ENCODE measurements at regions of chr2 and their contacts with region 1.

Region 1: GRCh38 chr2:196171248-196171871 is at the start of gene STK17B:
- DNase-seq: peak; percentile 92
- ATAC-seq: peak; percentile 94 to 95
- H3K4me3 ChIP-seq: peak within 1 kb of the TSS; percentile 74 to 97 (median 89)
- H3K27ac ChIP-seq: peak within 1 kb of the TSS; percentile 77 to 92 (median 86)
- H3K4me1 ChIP-seq: peaks cover 13 to 22% of the 10 kb centered on the region in 2 donors
- H3K27me3 ChIP-seq: no peaks in the 10 kb centered on the region
- CTCF ChIP-seq: no peak
- POLR2A ChIP-seq: peak; percentile 71 to 87
- total RNA-seq, gene STK17B: 4.4 to 11.5 (median 8.8) TPM

Region 2: DNA sequence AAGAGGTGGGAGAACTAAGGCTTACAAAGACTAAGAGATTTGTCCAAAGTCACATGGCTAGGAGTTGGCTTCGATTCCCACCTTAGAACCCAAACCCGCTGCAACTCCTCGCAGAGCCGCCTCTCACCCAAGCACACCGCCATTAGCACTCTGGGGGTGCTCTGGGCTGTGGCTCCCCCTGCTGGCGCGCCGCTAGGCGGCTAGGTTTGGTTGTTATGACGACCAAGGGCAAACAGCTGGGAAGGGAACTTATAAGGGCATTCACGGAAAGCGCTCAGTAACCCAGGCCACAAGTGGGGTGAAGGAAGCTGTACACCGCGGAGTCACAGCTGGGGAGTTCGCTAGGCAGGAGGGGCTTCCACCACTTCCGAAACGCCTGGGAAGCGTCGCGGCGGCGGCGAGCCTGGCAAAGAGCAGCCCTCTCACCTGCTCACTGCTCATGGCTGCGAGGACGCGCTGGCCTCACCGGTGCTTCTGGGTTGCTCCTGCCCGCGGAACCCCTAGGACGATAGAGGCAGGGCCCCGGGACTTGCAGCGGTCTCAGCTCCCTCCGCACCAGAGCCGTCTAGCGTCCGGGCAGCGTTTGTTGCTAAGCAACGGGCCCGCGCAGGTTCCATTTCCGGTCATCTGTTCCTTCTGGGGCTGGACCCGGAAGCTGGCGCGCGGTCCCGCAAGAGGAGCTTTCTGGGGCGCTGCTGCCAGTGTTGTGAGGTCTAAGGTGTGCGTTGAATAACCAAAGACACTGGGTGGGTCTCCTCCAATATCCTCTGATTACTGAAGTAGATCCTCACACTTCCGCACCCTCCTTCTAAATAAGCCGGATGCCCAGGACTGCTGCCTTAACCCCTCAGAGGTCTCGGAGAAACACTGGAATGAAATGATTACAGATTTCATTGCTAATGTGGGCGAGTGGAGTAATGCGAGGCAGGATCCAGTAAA is 102.8 kb before region 1 on chr2 and contains the start of gene DNAH7:
- in situ Hi-C with region 1: loop called in 1 of 4 experiments (anchors 25 kb)
- intact Hi-C with region 1: loop called (anchors 5 kb)
- DNase-seq: peak; percentile 68 to 81
- ATAC-seq: peak; percentile 86 to 97
- H3K4me3 ChIP-seq: peak within 1 kb of the TSS; percentile 72 to 86 (median 78)
- H3K27ac ChIP-seq: peak within 1 kb of the TSS in 3 of 4 donors; percentile 9 to 53 (median 44)
- H3K4me1 ChIP-seq: peaks cover 0 to 5% of the 10 kb centered on the region in 2 donors
- H3K27me3 ChIP-seq: no peaks in the 10 kb centered on the region
- CTCF ChIP-seq: peak in 3 of 5 experiments; percentile 20 to 59 (median 57)
- POLR2A ChIP-seq: no peak
- total RNA-seq, gene DNAH7: 0.05 to 0.07 (median 0.05) TPM in 3 of 4 donors, not detected in the other

Region 3: DNA sequence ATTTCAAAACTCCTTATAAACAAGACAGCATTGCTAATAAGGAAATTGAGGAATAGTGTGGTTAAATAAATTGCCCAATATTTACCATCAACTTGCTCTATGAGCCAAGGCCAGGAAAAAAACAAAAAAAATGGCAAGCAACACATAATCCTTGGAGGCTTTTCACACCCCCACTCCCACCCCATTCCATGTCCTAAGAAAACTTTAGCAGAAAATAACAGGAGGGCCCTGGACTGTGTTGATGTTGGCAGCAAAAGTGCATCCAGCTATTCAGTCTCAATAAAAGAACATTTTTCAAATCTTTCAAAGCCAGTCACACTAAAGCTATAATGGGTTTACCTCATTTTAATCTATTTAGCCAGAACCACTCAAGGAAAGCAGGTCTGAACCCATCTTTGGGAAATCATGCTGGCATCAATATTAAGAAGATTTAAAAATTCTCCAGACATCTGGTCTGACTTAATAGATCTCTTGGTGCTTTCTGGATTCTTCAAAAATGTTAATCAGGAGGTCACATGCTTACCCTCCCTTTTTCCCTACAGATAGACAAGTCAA is 34.6 kb after region 1 on chr2:
- in situ Hi-C with region 1: no loop called
- intact Hi-C with region 1: loop called (anchors 5 kb)
- DNase-seq: peak in 1 of 2 donors; percentile 58
- ATAC-seq: peak; percentile 68 to 77
- H3K4me3 ChIP-seq: no peak overlapping the region
- H3K27ac ChIP-seq: peak overlapping the region; percentile 1 to 47 (median 20)
- H3K4me1 ChIP-seq: peaks cover 0 to 6% of the 10 kb centered on the region in 2 donors
- H3K27me3 ChIP-seq: no peaks in the 10 kb centered on the region
- CTCF ChIP-seq: no peak
- POLR2A ChIP-seq: no peak

Region 4: GRCh38 chr2:196639180-196640030 is 468.0 kb after region 1 on chr2 and contains the start of gene CCDC150:
- in situ Hi-C with region 1: no loop called
- intact Hi-C with region 1: loop called (anchors 10 kb)
- DNase-seq: peak; percentile 74 to 87
- ATAC-seq: peak; percentile 97 to 99
- H3K4me3 ChIP-seq: peak within 1 kb of the TSS; percentile 69 to 85 (median 75)
- H3K27ac ChIP-seq: peak within 1 kb of the TSS; percentile 18 to 65 (median 58)
- H3K4me1 ChIP-seq: peaks cover 5 to 7% of the 10 kb centered on the region in 2 donors
- H3K27me3 ChIP-seq: no peaks in the 10 kb centered on the region
- CTCF ChIP-seq: no peak
- POLR2A ChIP-seq: no peak
- total RNA-seq, gene CCDC150: 0.31 to 0.83 TPM in 2 of 4 donors, not detected in the others